ENCODE measurements at regions of chr4 and their contacts with region 1.

Region 1: DNA sequence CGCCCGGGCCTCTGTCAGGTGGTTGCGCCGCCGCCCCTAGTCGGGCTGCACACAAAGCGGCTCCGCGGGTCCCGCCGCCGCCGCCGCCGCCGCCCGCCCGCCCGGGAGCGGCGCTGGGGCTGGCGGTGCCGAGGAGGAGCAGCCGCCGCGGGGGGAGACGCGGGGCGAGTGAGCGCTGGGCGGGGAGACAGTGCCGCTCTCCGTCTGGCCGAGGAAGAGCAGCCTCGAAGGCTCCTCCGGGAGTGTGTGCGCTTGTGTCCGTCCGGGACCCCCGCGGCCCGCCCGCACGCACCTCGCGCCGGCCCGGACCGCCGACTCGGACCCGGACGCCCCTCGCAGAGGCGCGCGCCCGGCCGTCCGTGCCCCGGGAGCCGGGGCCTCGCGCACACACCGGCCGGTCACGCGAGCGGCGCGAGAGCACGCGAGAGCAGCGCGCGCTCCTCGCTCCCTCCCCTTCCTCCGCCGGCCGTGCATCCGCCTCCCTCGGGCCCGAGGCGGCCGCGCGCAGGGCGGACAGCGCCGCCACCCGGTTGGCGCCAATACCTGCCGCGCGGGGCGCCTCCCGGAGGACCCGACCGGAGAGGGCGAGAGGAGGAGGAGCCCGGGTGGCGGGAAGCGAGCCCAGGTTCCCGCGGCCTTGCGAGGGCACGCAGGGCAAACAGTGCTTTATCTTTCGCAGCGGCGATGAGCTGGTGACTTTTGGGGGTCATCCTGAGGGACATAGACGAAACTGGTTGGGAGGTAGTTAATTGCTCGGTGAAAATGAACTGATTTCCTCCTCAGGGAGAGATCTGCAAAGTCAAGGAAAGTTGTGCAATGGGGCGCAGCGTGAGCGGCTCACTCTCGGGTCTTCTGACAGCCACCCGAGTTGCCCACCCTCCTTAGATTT is at the start of gene PDS5A:
- DNase-seq: peak; percentile 93
- H3K4me3 Mint-ChIP-seq: peak within 1 kb of the TSS; percentile 94
- H3K27ac Mint-ChIP-seq: peak within 1 kb of the TSS; percentile 99
- H3K4me1 Mint-ChIP-seq: peaks cover 38% of the 10 kb centered on the region
- H3K27me3 Mint-ChIP-seq: no peaks in the 10 kb centered on the region
- total RNA-seq, gene PDS5A: 101 to 103 TPM

Region 2: DNA sequence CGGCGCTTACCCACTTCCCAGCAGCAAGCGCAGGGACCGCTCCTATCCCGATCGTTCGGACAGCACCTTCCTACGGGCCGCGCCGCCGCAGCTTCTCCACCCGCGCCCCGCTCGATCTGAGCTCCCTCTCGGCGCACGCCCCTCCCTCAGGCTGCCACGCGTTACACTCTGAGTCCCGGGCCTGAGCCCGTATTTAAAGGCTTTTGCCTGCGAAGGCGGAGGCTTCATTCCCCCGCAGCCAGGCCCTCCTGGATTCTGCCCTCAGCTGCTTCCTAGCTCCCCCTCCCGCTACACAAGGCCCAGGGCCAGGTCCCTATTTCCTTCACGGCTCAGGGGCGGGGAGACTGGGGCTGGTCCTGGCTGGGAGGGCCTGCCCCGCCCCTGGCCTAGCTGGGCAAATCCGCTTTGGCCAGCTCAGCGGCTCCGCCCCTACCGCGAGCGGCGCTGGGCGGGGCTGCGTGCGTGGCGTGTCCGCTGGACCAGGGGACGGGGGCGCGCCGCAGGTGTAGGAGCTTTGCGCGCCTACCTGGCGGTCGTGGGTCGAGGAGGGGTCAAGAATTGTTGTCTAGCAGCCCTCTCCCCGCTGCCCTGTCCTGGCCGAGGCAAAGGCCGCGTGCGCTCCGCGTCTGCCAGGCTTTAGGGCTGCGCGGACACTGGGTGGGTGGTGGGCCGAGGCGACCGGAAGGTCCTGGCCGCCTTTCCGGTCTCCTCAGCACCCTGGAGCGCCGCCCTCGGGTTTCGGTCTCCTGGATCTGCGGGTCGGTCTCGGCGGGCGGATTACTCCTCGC is 450.3 kb before region 1 on chr4 and contains the start of gene UGDH:
- CTCF ChIA-PET with region 1: no interaction called
- POLR2A ChIA-PET with region 1: no interaction called
- intact Hi-C with region 1: loop called (anchors 5 kb)
- DNase-seq: peak; percentile 94
- H3K4me3 Mint-ChIP-seq: peak within 1 kb of the TSS; percentile 99
- H3K27ac Mint-ChIP-seq: peak within 1 kb of the TSS; percentile 90
- H3K4me1 Mint-ChIP-seq: peaks cover 18% of the 10 kb centered on the region
- H3K27me3 Mint-ChIP-seq: no peaks in the 10 kb centered on the region
- total RNA-seq, gene UGDH: 28.7 to 32.9 TPM

Region 3: GRCh38 chr4:39587881-39588280 is 389.9 kb before region 1 on chr4:
- CTCF ChIA-PET with region 1: no interaction called
- POLR2A ChIA-PET with region 1: no interaction called
- intact Hi-C with region 1: no loop called
- DNase-seq: no peak
- H3K4me3 Mint-ChIP-seq: no peak overlapping the region
- H3K27ac Mint-ChIP-seq: no peak overlapping the region
- H3K4me1 Mint-ChIP-seq: no peaks in the 10 kb centered on the region
- H3K27me3 Mint-ChIP-seq: no peaks in the 10 kb centered on the region

Region 4: DNA sequence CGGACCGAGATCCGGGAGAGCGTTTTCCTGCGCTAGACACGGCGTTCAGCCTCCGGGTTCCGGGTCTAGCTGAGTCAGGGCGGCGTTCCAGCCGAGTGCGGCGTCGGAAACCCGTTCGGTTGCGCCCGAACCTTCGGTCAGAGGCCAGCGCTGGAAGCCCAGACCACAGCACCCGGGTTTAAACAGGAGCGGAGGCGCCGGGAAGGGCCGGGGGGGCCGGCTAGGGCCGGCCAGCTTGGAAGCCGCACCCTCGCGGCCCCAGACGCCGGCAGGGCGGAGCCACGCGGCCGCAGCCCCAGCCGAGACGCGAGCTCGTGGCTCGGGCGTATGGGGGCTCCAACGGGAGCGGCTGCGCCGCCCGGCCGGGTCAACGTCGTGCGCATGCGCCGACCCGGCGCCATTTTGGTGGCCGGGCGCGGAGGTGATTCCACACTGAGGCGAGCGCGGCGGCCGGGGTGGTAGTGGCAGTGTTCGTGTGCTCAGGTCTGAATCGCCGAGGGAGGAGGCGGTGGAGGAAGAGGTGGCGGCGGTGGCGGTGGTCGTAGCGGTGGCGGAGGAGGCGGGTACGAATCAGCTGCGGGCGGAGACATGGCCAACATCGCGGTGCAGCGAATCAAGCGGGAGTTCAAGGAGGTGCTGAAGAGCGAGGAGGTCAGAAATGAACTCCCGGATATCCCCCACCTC is 279.9 kb before region 1 on chr4 and contains the start of gene UBE2K:
- CTCF ChIA-PET with region 1: interaction called, 4 read pairs
- POLR2A ChIA-PET with region 1: interaction called, 3 read pairs
- intact Hi-C with region 1: loop called (anchors 1 kb)
- DNase-seq: peak; percentile 92
- H3K4me3 Mint-ChIP-seq: peak within 1 kb of the TSS; percentile 96
- H3K27ac Mint-ChIP-seq: peak within 1 kb of the TSS; percentile 96
- H3K4me1 Mint-ChIP-seq: peaks cover 36% of the 10 kb centered on the region
- H3K27me3 Mint-ChIP-seq: no peaks in the 10 kb centered on the region
- total RNA-seq, gene UBE2K: 81.4 to 83.5 TPM

Region 5: GRCh38 chr4:39846120-39846519 is 131.6 kb before region 1 on chr4:
- CTCF ChIA-PET with region 1: no interaction called
- POLR2A ChIA-PET with region 1: no interaction called
- intact Hi-C with region 1: loop called (anchors 10 kb)
- DNase-seq: no peak
- H3K4me3 Mint-ChIP-seq: no peak overlapping the region
- H3K27ac Mint-ChIP-seq: no peak overlapping the region
- H3K4me1 Mint-ChIP-seq: no peaks in the 10 kb centered on the region
- H3K27me3 Mint-ChIP-seq: no peaks in the 10 kb centered on the region

Region 6: GRCh38 chr4:40325189-40326019 is 347.7 kb after region 1 on chr4:
- CTCF ChIA-PET with region 1: interaction called, 4 read pairs
- POLR2A ChIA-PET with region 1: no interaction called
- intact Hi-C with region 1: loop called (anchors 5 kb)
- DNase-seq: peak; percentile 75
- H3K4me3 Mint-ChIP-seq: no peak overlapping the region
- H3K27ac Mint-ChIP-seq: no peak overlapping the region
- H3K4me1 Mint-ChIP-seq: peaks cover 18% of the 10 kb centered on the region
- H3K27me3 Mint-ChIP-seq: no peaks in the 10 kb centered on the region

Measured in activated CD4-positive, alpha-beta memory T cell treated with anti-CD3 and anti-CD28 coated beads for 36 hours (primary cell).